Mammary epithelial cell (primary cell): ENCODE measurements at regions of chr5 and their contacts with region 1.

Region 1: GRCh38 chr5:115625579-115626444 is at the start of gene TMED7:
- DNase-seq: peak; percentile 98
- H3K4me3 ChIP-seq: peak within 1 kb of the TSS; percentile 83 to 97 (median 96)
- H3K27ac ChIP-seq: peak within 1 kb of the TSS; percentile 80
- H3K4me1 ChIP-seq: peaks cover 13% of the 10 kb centered on the region
- H3K27me3 ChIP-seq: no peaks in the 10 kb centered on the region
- CTCF ChIP-seq: no peak
- total RNA-seq, gene TMED7: 95.6 to 132 TPM

Region 2: DNA sequence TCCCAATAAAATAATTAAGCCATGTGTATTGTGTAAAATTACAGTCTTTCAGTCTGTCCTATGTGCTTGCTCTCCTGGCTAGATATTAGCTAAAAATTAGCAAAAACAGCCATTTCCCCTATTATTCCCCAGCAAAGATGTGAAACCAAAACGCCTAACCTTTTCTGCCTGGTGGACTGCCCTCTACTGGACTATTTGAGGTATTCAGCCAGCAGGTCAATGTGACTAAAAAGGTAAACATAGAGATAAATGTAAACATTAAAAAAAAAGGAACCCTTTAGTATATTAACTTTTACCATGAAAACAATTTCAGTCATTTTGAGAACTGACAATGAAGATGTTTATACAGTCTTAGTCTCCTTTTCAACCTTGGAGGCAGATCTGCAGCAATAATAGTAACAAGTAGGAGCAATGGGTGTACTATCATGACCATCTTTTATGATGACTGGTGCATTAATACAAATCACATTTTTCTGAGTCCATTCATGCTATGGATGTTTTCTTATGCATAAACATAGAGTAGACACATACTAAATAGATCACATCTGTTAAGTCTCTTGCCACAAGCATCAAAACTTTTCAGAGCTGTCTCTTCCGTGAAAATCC is 205.5 kb after region 1 on chr5:
- CTCF ChIA-PET with region 1: no interaction called
- dilution Hi-C with region 1: no loop called
- in situ Hi-C with region 1: loop called in 1 of 2 experiments (anchors 10 kb)
- intact Hi-C with region 1: no loop called
- DNase-seq: peak; percentile 19
- H3K4me3 ChIP-seq: no peak overlapping the region
- H3K27ac ChIP-seq: no peak overlapping the region
- H3K4me1 ChIP-seq: no peaks in the 10 kb centered on the region
- H3K27me3 ChIP-seq: no peaks in the 10 kb centered on the region
- CTCF ChIP-seq: peak; percentile 81

Region 3: GRCh38 chr5:116076496-116076895 is 450.7 kb after region 1 on chr5:
- CTCF ChIA-PET with region 1: no interaction called
- dilution Hi-C with region 1: no loop called
- in situ Hi-C with region 1: loop called in 1 of 2 experiments (anchors 10 kb)
- intact Hi-C with region 1: no loop called
- DNase-seq: no peak
- H3K4me3 ChIP-seq: no peak overlapping the region
- H3K27ac ChIP-seq: no peak overlapping the region
- H3K4me1 ChIP-seq: no peaks in the 10 kb centered on the region
- H3K27me3 ChIP-seq: no peaks in the 10 kb centered on the region
- CTCF ChIP-seq: no peak